Activated CD4-positive, alpha-beta T cell treated with anti-CD3 and anti-CD28 coated beads, Interleukin-2, amount 10 ng/mL, durations not matched to agents 24 days and 14 days (primary cell): ENCODE measurements at regions of chr3 and their contacts with region 1.

Region 1: DNA sequence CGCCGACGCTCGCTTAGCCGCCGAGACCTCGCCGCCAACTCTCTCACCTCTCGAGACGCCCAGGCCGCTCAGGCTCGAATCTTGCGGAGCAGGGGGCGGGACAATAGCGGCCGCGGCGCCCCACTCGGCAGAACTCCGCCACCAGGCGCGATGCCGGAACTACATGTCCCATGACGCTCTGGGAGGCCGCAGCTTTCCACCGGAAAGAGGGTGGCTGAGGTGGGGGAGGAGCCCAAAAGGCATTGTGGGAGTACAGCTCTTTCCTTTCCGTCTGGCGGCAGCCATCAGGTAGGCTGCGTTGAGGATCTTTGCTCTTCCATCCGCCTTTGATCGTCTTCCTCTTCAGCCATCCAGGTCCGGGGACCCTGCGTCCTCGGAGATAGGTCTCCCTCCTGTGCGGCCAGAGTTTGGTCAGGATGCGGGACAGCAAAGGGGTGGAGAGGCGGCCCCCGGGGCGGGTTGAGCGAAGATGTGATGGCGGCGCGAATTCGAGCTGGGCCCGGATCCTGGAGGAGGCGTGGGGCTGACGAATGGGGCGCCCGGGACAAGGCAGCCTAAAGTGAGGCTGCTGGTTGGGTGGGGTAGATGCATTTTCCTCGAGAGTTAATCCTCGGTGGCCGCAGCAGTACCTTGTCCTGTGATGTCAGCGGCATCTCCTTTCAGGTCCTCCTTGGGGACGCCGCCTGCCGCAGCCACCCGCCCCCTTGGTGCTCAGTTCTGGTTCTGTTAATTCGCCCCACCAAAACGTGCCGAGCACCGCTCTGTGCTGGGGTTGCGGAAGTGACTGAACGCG is at the starts of genes NKIRAS1 and RPL15:
- DNase-seq: peak; percentile 99
- H3K4me3 Mint-ChIP-seq: peak within 1 kb of the TSS; percentile 99
- H3K27ac Mint-ChIP-seq: peak within 1 kb of the TSS; percentile 99
- H3K4me1 Mint-ChIP-seq: peaks cover 35% of the 10 kb centered on the region
- H3K27me3 Mint-ChIP-seq: peaks cover 4% of the 10 kb centered on the region
- total RNA-seq, gene NKIRAS1: 4.8 and 5.2 TPM in 2 replicates
- total RNA-seq, gene RPL15: 1,840 and 1,850 TPM in 2 replicates

Region 2: DNA sequence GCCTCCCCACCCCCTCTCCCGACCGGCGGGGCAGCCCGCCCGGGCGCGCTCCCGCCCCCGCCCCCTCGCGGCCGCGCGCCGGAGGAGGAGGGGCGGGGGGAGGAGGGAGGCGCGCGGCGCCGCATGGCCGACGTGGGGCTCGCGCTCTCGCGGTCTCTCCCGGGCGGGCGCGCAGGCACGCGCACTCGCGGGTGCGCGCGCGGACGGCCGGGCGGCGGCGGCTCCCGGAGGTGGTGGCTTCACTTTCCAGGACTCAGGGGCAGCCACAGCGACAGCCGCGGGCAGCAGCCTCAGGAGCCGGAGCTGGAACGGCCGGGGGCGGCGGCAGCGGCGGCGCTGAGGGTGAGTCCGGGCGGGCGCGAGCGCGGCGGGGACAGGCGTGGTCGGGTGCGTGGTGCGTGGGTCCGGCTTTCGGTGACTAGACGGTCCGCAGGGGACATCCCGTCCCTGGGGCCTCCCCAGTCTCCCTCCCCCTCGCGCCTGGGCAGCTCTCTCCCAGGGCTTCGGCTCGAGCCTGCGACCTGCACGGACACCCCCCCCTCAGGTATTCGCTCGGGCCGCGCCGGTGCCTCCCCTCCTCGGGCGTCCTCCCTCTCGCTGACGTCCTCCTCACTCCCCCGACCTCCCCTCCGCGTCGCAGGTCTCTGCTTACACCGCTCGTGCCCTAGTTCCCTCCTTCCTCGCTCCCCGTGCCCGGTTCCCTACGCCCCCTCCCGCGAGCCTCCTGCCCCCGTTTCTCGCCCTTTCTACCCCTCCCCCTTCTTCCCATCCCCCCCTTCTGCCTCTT is 714.0 kb before region 1 on chr3 and contains the start of gene UBE2E2:
- intact Hi-C with region 1: loop called (anchors 1 kb)
- DNase-seq: peak; percentile 86
- H3K4me3 Mint-ChIP-seq: peak within 1 kb of the TSS; percentile 95
- H3K27ac Mint-ChIP-seq: peak within 1 kb of the TSS; percentile 93
- H3K4me1 Mint-ChIP-seq: peaks cover 24% of the 10 kb centered on the region
- H3K27me3 Mint-ChIP-seq: peaks cover 48% of the 10 kb centered on the region
- total RNA-seq, gene UBE2E2: 8.0 and 13.8 TPM in 2 replicates

Region 3: DNA sequence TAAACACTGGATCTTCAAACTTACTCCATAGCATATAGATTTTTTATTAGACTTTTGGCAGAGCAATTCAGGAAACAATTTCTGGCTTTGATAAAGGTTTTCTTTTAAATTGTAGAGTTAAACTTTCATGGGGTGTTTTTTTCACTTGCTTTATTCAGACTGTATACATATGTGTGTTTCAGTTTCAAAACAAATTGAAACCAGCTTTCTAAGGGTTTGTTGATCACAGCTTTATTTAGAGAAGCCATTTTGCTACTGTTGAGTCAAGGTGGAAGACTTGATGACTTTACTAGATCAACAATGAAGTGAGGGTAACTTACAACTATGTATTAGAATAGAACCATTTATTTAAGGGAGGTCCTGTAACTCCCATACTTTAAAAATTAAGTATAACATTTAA is 105.2 kb before region 1 on chr3:
- intact Hi-C with region 1: loop called (anchors 1 kb)
- DNase-seq: no peak
- H3K4me3 Mint-ChIP-seq: peak overlapping the region; percentile 92
- H3K27ac Mint-ChIP-seq: peak overlapping the region; percentile 96
- H3K4me1 Mint-ChIP-seq: peaks cover 55% of the 10 kb centered on the region
- H3K27me3 Mint-ChIP-seq: no peaks in the 10 kb centered on the region

Region 4: GRCh38 chr3:23945903-23946751 is 29.0 kb after region 1 on chr3:
- intact Hi-C with region 1: loop called (anchors 1 kb)
- DNase-seq: peak; percentile 97
- H3K4me3 Mint-ChIP-seq: peak overlapping the region; percentile 85
- H3K27ac Mint-ChIP-seq: peak overlapping the region; percentile 87
- H3K4me1 Mint-ChIP-seq: peaks cover 26% of the 10 kb centered on the region
- H3K27me3 Mint-ChIP-seq: peaks cover 33% of the 10 kb centered on the region

Region 5: DNA sequence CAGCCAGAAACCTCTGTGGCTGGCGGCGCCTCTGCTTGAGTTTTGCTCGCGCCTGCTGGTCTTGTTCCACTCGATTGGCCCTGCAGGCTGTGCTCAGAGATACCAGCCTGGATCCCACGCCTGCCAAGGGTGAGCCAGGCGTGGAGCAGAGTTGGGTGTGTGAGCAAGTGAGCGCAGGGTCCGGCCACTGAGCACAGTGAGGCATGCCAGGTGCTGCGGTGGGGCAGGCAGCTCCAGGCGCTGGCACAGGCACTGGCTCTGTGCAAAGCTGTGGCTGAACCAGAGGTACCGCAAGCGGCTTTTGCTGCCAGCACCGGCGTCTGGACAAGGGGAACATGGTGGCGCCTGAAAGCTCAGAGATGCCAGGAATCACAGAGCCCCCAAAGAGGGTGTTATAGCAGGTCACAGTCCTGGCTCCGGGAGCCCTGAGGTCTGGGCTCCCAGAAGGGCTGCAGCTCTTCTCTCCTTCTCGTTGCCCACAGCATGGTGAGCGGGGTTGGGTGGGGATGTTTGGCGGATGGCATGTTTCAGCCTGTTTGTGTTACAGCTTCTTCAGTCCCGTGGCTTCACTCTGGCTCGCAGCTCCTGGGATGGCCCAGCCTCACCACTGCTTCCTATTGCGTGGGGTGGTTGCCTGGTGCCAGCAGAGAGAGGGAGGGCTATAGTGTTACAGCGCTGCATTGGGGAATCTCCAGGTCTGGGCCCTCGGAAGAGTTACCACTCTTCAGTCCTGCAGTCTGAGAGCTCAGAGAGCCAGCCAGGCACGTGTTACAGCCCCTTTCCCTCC is 101.9 kb after region 1 on chr3:
- intact Hi-C with region 1: no loop called
- DNase-seq: no peak
- H3K4me3 Mint-ChIP-seq: no peak overlapping the region
- H3K27ac Mint-ChIP-seq: no peak overlapping the region
- H3K4me1 Mint-ChIP-seq: no peaks in the 10 kb centered on the region
- H3K27me3 Mint-ChIP-seq: no peaks in the 10 kb centered on the region

Region 6: GRCh38 chr3:25789596-25790556 is 1872.8 kb after region 1 on chr3 and contains the start of gene OXSM:
- intact Hi-C with region 1: loop called (anchors 10 kb)
- DNase-seq: peak; percentile 97
- H3K4me3 Mint-ChIP-seq: peak within 1 kb of the TSS; percentile 90
- H3K27ac Mint-ChIP-seq: peak within 1 kb of the TSS; percentile 99
- H3K4me1 Mint-ChIP-seq: peaks cover 54% of the 10 kb centered on the region
- H3K27me3 Mint-ChIP-seq: peaks cover 2% of the 10 kb centered on the region
- total RNA-seq, gene OXSM: 13.3 and 16.3 TPM in 2 replicates